ENCODE measurements at regions of chr10 and their contacts with region 1.

Region 1: GRCh38 chr10:84429926-84430520 is 101.6 kb downstream of the CCSER2 start:
- DNase-seq: peak; percentile 73
- H3K4me3 ChIP-seq: no peak overlapping the region
- H3K27ac ChIP-seq: no peak overlapping the region
- H3K4me1 ChIP-seq: peaks cover 6% of the 10 kb centered on the region
- H3K27me3 ChIP-seq: no peaks in the 10 kb centered on the region
- CTCF ChIP-seq: peak; percentile 70 to 81
- POLR2A ChIP-seq: no peak

Region 2: GRCh38 chr10:84308481-84309304 is 121.3 kb before region 1 on chr10:
- CTCF ChIA-PET with region 1: no interaction called
- POLR2A ChIA-PET with region 1: no interaction called
- dilution Hi-C with region 1: no loop called
- intact Hi-C with region 1: no loop called
- DNase-seq: peak; percentile 93
- H3K4me3 ChIP-seq: peak overlapping the region in 1 of 3 experiments; percentile 10
- H3K27ac ChIP-seq: peak overlapping the region; percentile 84
- H3K4me1 ChIP-seq: peaks cover 35% of the 10 kb centered on the region
- H3K27me3 ChIP-seq: no peaks in the 10 kb centered on the region
- CTCF ChIP-seq: no peak
- POLR2A ChIP-seq: no peak

Region 3: GRCh38 chr10:84375011-84375410 is 55.0 kb before region 1 on chr10:
- CTCF ChIA-PET with region 1: interaction called, 18 read pairs
- POLR2A ChIA-PET with region 1: no interaction called
- dilution Hi-C with region 1: no loop called
- intact Hi-C with region 1: loop called (anchors 1 kb)
- DNase-seq: peak; percentile 81
- H3K4me3 ChIP-seq: no peak overlapping the region
- H3K27ac ChIP-seq: no peak overlapping the region
- H3K4me1 ChIP-seq: no peaks in the 10 kb centered on the region
- H3K27me3 ChIP-seq: no peaks in the 10 kb centered on the region
- CTCF ChIP-seq: peak; percentile 41 to 52
- POLR2A ChIP-seq: no peak

Region 4: DNA sequence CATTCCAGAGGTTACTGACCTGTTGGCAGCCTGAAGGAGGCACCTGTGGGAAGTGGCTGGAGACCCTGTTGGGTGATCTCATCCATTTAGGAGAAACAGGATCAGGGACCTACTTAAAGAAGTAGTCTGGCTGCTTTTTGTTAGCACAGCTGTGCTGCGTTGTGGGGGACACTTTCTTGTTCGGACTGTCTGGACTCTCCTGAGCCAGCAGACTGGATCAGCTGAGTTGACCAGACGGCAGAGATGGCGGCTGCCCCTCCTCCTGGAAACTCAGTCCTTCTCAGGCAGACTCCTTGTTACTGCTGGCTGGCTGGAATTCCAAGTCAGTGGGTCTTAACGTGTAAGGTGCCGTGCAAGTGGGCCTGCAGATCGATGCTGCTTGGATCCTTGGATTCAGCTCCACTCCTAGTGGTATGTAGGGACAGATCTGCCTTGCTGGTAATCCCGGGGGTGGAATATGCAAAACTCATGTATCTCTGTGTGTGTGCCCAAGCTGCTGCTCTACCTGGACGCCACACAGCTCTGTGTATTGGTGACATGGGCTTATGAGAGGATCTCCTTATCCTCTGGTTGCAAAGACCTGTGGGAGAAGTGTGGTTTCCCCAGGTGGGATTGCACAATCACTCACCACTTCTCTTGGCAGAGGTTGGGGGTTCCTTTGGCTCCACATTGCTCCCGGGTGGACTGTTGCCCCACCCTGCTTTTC is 14.3 kb before region 1 on chr10:
- CTCF ChIA-PET with region 1: interaction called, 24 read pairs
- POLR2A ChIA-PET with region 1: no interaction called
- dilution Hi-C with region 1: no loop called
- intact Hi-C with region 1: no loop called
- DNase-seq: no peak
- H3K4me3 ChIP-seq: no peak overlapping the region
- H3K27ac ChIP-seq: no peak overlapping the region
- H3K4me1 ChIP-seq: no peaks in the 10 kb centered on the region
- H3K27me3 ChIP-seq: no peaks in the 10 kb centered on the region
- CTCF ChIP-seq: no peak
- POLR2A ChIP-seq: no peak

Region 5: DNA sequence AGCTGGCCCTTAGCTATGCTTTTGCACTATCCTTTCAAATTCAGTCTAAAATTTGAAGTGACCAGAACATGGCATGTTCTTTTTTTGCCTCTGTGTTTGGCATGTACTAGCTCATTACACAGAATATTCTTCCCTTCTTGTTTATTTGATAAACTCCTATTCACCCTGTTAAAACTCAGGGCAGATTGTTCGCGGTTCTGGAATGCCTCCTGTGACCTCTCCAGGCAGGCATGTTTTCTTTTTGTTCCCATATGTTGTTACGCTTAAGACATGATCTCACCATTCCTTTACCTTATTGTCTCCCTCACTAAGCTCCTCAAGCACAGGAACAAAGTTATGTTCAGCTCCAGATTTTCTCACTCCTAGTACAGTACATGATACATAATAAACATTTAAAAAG is 80.1 kb after region 1 on chr10:
- CTCF ChIA-PET with region 1: interaction called, 20 read pairs
- POLR2A ChIA-PET with region 1: no interaction called
- dilution Hi-C with region 1: no loop called
- intact Hi-C with region 1: loop called (anchors 2 kb)
- DNase-seq: peak; percentile 86
- H3K4me3 ChIP-seq: no peak overlapping the region
- H3K27ac ChIP-seq: peak overlapping the region; percentile 94
- H3K4me1 ChIP-seq: peaks cover 40% of the 10 kb centered on the region
- H3K27me3 ChIP-seq: no peaks in the 10 kb centered on the region
- CTCF ChIP-seq: no peak
- POLR2A ChIP-seq: no peak

Region 6: DNA sequence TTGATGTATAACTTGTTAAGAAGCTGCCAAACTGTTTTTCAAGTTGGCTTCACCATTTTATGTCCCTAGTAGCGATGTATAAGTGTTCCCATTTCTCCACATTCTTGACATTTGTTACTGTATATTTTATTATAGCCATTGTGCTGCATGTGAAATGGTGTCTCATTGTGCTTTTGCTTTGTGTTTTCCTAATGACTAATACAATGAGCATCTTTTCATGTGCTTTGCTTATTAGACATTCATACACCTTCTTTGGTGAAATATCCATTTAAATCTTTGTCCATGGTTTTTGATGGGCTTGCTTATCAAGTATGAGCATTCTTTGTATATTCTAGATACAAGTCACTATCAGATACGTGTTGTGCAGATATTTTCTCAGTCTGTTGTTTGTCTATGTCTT is 101.4 kb after region 1 on chr10:
- CTCF ChIA-PET with region 1: interaction called, 190 read pairs
- POLR2A ChIA-PET with region 1: no interaction called
- dilution Hi-C with region 1: no loop called
- intact Hi-C with region 1: no loop called
- DNase-seq: peak; percentile 60
- H3K4me3 ChIP-seq: no peak overlapping the region
- H3K27ac ChIP-seq: peak overlapping the region; percentile 5
- H3K4me1 ChIP-seq: no peaks in the 10 kb centered on the region
- H3K27me3 ChIP-seq: no peaks in the 10 kb centered on the region
- CTCF ChIP-seq: no peak
- POLR2A ChIP-seq: no peak